PC-9 (cell line): ENCODE measurements at regions of chr11 and their contacts with region 1.

Region 1: DNA sequence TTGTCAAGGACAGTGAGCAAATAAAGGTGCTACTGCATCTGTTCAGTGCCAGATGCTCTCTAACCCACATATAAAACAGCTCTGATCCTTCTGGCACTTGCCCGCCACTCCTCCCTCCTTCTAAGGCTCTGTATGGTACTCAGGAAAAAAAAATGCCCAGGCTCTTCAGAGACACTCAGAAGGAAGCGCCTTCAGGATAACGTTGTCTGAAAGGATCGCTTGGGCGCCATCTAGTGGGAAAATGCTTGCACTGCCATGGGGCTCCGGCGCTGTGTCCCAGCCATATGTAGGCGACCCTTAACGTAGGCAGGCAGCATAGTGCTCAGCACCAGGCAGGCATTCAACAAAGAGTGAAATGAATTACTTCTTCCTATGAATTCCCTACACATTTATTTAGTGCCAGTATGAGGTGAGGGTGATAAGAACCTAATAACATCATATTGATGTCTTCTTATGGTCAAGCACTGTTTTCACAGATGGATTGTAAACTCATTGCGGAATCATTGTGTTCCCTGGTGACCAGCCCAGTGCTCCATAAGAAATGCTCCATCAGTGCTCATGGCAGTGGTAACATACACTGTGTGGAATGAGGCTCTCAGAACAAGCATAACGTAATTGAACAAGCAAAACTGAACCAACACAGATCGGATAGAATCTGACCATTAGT is 39.6 kb downstream of the PAMR1 start:
- DNase-seq: peak; percentile 68 to 83
- H3K4me3 ChIP-seq: no peak overlapping the region
- H3K27ac ChIP-seq: no peak overlapping the region
- H3K4me1 ChIP-seq: no peaks in the 10 kb centered on the region
- H3K27me3 ChIP-seq: no peaks in the 10 kb centered on the region
- CTCF ChIP-seq: peak; percentile 96

Region 2: GRCh38 chr11:34997952-34998528 is 487.7 kb before region 1 on chr11:
- CTCF ChIA-PET with region 1: no interaction called
- POLR2A ChIA-PET with region 1: no interaction called
- intact Hi-C with region 1: loop called (anchors 5 kb)
- DNase-seq: peak in 1 of 2 experiments; percentile 71
- H3K4me3 ChIP-seq: no peak overlapping the region
- H3K27ac ChIP-seq: peak overlapping the region; percentile 47
- H3K4me1 ChIP-seq: peaks cover 11% of the 10 kb centered on the region
- H3K27me3 ChIP-seq: no peaks in the 10 kb centered on the region
- CTCF ChIP-seq: peak; percentile 92

Region 3: DNA sequence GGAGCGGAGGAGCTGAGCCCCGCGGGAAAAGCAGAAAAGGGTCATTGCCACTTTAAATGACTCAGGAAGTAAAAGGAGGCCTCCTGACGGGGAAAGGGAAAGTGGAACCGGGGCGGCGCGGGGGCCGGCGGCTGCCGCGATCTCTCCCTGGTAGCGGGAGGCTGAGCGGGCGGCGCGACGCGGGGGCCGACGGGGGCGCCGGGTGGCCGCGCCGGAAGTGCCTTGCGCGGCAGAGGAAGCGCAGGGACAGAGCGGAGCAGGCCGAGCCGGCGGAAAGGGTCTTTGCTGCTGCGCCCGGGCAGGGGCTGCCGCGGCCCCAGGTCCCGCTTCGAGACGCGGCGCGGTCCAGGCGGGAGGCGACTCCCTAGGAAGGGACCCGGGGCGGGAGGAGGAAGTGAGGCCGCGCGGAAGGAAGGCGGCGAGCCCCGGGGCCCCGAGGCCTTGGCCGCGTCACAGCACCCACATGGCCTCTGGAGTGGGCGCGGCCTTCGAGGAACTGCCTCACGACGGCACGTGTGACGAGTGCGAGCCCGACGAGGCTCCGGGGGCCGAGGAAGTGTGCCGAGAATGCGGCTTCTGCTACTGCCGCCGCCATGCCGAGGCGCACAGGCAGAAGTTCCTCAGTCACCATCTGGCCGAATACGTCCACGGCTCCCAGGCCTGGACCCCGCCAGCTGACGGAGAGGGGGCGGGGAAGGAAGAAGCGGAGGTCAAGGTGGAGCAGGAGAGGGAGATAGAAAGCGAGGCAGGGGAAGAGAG is 177.0 kb after region 1 on chr11 and contains the start of gene TRIM44:
- CTCF ChIA-PET with region 1: no interaction called
- POLR2A ChIA-PET with region 1: no interaction called
- intact Hi-C with region 1: loop called (anchors 5 kb)
- DNase-seq: peak; percentile 81 to 89
- H3K4me3 ChIP-seq: peak within 1 kb of the TSS; percentile 88
- H3K27ac ChIP-seq: peak within 1 kb of the TSS; percentile 89
- H3K4me1 ChIP-seq: peaks cover 47% of the 10 kb centered on the region
- H3K27me3 ChIP-seq: no peaks in the 10 kb centered on the region
- CTCF ChIP-seq: no peak
- total RNA-seq, gene TRIM44: 91.7 and 100 TPM in 2 replicates

Region 4: GRCh38 chr11:36258730-36259360 is 773.1 kb after region 1 on chr11:
- CTCF ChIA-PET with region 1: interaction called, 10 read pairs
- POLR2A ChIA-PET with region 1: no interaction called
- intact Hi-C with region 1: no loop called
- DNase-seq: peak; percentile 35 to 44
- H3K4me3 ChIP-seq: no peak overlapping the region
- H3K27ac ChIP-seq: no peak overlapping the region
- H3K4me1 ChIP-seq: peaks cover 16% of the 10 kb centered on the region
- H3K27me3 ChIP-seq: no peaks in the 10 kb centered on the region
- CTCF ChIP-seq: peak; percentile 71

Region 5: DNA sequence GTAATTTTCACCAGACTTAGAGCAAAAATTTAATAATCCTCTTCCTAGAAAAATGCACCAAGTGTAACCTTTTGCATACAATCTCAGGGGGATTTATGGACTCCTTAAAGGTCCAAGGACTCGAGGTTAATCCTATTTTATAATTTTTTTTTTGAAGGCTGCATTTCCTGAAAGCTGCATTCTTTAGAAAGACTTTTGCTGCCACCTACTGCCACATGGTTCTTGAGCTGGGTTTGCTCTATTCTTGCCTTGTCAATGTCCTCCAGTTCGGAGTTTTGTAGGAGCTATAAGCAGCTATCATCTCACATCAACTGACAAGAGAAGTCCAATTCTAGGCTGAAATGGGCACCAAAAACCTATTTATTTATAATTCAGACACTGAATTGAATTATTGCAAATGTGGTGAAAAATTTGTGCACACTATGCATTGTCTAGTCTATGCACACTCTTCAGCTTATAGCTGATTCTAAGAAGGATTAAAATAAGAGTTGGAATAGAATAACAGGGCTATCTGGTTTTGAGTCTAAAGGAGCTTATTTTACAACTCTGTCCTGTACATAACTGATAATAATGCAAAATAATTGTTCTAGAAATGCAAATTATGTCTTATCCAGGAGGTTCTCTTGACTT is 993.0 kb after region 1 on chr11:
- CTCF ChIA-PET with region 1: no interaction called
- POLR2A ChIA-PET with region 1: no interaction called
- intact Hi-C with region 1: loop called (anchors 5 kb)
- DNase-seq: peak; percentile 47 to 51
- H3K4me3 ChIP-seq: no peak overlapping the region
- H3K27ac ChIP-seq: no peak overlapping the region
- H3K4me1 ChIP-seq: 0 out of 2 replicates have a peak, but pooled peaks cover 3% of the 10 kb centered on the region
- H3K27me3 ChIP-seq: no peaks in the 10 kb centered on the region
- CTCF ChIP-seq: peak; percentile 88